CD14-positive monocyte (primary cell): ENCODE measurements at regions of chr10 and their contacts with region 1.

Region 1: GRCh38 chr10:3720228-3721019 is 64.6 kb downstream of the KLF6 start:
- DNase-seq: peak; percentile 97 to 99 (median 98)
- H3K4me3 ChIP-seq: peak overlapping the region in 1 of 3 experiments; percentile 65
- H3K4me3 Mint-ChIP-seq: peak overlapping the region; percentile 65 to 88
- H3K27ac ChIP-seq: peak overlapping the region; percentile 85 to 92
- H3K27ac Mint-ChIP-seq: peak overlapping the region; percentile 97 to 99 (median 99)
- H3K4me1 ChIP-seq: peaks cover 48 to 55% of the 10 kb centered on the region in 2 donors
- H3K4me1 Mint-ChIP-seq: peaks cover 67% of the 10 kb centered on the region
- H3K27me3 ChIP-seq: no peaks in the 10 kb centered on the region
- H3K27me3 Mint-ChIP-seq: peaks cover 0 to 3% (median 0%) of the 10 kb centered on the region in 3 donors
- CTCF ChIP-seq: no peak

Region 2: GRCh38 chr10:3757638-3758490 is 37.4 kb after region 1 on chr10:
- intact Hi-C with region 1: loop called in 1 of 2 experiments (anchors 5 kb)
- DNase-seq: peak in 2 of 3 donors; percentile 35 to 73
- H3K4me3 ChIP-seq: no peak overlapping the region
- H3K4me3 Mint-ChIP-seq: no peak overlapping the region
- H3K27ac ChIP-seq: no peak overlapping the region
- H3K27ac Mint-ChIP-seq: peak overlapping the region in 4 of 7 donors; percentile 11 to 76 (median 42)
- H3K4me1 ChIP-seq: peaks cover 66 to 79% of the 10 kb centered on the region in 2 donors
- H3K4me1 Mint-ChIP-seq: peaks cover 69% of the 10 kb centered on the region
- H3K27me3 ChIP-seq: no peaks in the 10 kb centered on the region
- H3K27me3 Mint-ChIP-seq: peaks cover 1 to 5% (median 2%) of the 10 kb centered on the region in 3 donors
- CTCF ChIP-seq: no peak